Activated CD8-positive, alpha-beta T cell treated with anti-CD3 and anti-CD28 coated beads for 36 hours (primary cell): ENCODE measurements at regions of chr7 and their contacts with region 1.

Region 1: DNA sequence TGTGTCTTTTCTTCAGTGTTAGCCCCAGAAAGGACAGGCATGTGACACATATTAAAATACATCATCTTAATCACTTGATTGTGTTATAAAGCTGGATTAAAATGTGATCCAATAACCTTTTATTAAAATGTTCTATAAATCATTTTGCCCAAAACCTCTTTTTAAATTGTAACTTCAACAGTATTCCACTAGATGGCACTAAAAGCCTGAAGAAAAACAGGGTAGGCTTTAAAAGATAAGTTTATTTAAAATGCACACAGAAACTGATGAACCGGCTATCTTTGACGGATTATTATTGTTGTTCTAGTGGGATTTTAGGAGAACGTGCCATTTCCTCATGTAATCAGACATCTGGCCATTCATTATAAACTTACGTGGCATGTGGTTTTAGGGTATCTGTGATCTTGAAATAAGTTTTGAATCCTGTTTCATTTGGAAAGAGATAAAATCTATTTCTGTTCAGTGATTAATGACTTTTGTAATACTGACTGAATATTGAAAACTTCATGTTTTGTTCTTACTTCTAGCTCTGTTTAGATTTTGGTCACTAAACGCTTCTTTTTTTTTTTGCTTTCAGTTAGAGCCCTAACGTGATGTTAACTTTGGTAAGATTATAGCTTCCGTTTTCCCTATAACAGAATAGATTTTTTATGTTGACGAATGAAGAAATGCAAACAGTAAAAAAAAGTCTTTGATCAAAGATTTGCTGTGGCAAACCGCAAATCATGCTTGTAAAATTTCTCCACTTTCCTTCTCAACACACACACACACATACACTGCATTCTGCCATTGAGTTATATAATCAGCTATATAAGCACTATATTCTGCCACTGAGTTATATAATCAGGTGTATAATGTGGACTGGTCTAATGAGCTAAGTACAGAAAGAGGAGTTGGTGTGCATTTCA is 13.6 kb downstream of the VPS50 start:
- DNase-seq: no peak
- ATAC-seq: no peak
- H3K4me3 Mint-ChIP-seq: no peak overlapping the region
- H3K27ac Mint-ChIP-seq: no peak overlapping the region
- H3K4me1 Mint-ChIP-seq: peaks cover 8% of the 10 kb centered on the region
- H3K27me3 Mint-ChIP-seq: no peaks in the 10 kb centered on the region
- CTCF ChIP-seq: peak; percentile 78

Region 2: GRCh38 chr7:93133005-93133404 is 112.8 kb before region 1 on chr7:
- CTCF ChIA-PET with region 1: no interaction called
- POLR2A ChIA-PET with region 1: no interaction called
- intact Hi-C with region 1: no loop called
- DNase-seq: no peak
- ATAC-seq: no peak
- H3K4me3 Mint-ChIP-seq: no peak overlapping the region
- H3K27ac Mint-ChIP-seq: no peak overlapping the region
- H3K4me1 Mint-ChIP-seq: no peaks in the 10 kb centered on the region
- H3K27me3 Mint-ChIP-seq: no peaks in the 10 kb centered on the region
- CTCF ChIP-seq: no peak

Region 3: DNA sequence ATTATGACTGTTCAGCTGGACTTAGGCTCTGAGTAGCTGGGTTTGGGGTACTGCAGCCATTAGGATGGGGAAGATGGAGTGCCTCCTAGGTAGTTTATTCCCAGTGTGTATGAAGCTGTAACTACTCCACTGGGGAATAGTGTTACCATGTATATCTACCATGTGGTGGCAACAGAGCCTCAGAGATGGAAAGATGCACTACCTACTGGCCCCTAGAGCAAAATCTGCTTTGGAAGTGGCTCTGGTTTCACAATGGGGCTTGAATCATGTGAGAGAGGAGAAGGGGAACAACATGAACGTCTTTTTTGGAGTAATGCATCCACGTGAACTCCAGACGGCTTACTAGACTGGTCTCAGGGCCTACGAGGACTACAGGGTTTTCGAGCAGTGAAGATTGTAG is 161.5 kb after region 1 on chr7:
- CTCF ChIA-PET with region 1: no interaction called
- POLR2A ChIA-PET with region 1: no interaction called
- intact Hi-C with region 1: no loop called
- DNase-seq: no peak
- ATAC-seq: no peak
- H3K4me3 Mint-ChIP-seq: no peak overlapping the region
- H3K27ac Mint-ChIP-seq: no peak overlapping the region
- H3K4me1 Mint-ChIP-seq: no peaks in the 10 kb centered on the region
- H3K27me3 Mint-ChIP-seq: no peaks in the 10 kb centered on the region
- CTCF ChIP-seq: no peak

Region 4: GRCh38 chr7:93551063-93551904 is 305.5 kb after region 1 on chr7:
- CTCF ChIA-PET with region 1: interaction called, 40 read pairs
- POLR2A ChIA-PET with region 1: no interaction called
- intact Hi-C with region 1: loop called (anchors 5 kb)
- DNase-seq: peak; percentile 16
- ATAC-seq: no peak
- H3K4me3 Mint-ChIP-seq: no peak overlapping the region
- H3K27ac Mint-ChIP-seq: no peak overlapping the region
- H3K4me1 Mint-ChIP-seq: no peaks in the 10 kb centered on the region
- H3K27me3 Mint-ChIP-seq: no peaks in the 10 kb centered on the region
- CTCF ChIP-seq: peak; percentile 35